GM12878 (cell line): ENCODE measurements at regions of chr19 and their contacts with region 1.

Region 1: GRCh38 chr19:14198384-14199376 is 7.3 kb downstream of the ADGRL1 start:
- DNase-seq: no peak
- ATAC-seq: peak; percentile 20; the same call in 2 of the 3 replicates
- H3K4me3 ChIP-seq: no peak overlapping the region
- H3K27ac ChIP-seq: no peak overlapping the region
- H3K4me1 ChIP-seq: no peaks in the 10 kb centered on the region; the same call in 1 of the 2 replicates
- H3K27me3 ChIP-seq: no peaks in the 10 kb centered on the region
- CTCF ChIP-seq: peak in 2 of 3 experiments; percentile 8 to 25; a peak in 1 of 6 replicates
- EP300 ChIP-seq: no peak
- POLR2A ChIP-seq: no peak
- RAD21 ChIP-seq: no peak

Region 2: GRCh38 chr19:14318873-14319272 is 120.2 kb after region 1 on chr19:
- CTCF ChIA-PET with region 1: interaction called, 15 read pairs
- POLR2A ChIA-PET with region 1: no interaction called
- RAD21 ChIA-PET with region 1: interaction called, 13 read pairs
- SMC1A ChIA-PET with region 1: no interaction called
- in situ Hi-C with region 1: no loop called
- intact Hi-C with region 1: no loop called
- DNase-seq: no peak
- ATAC-seq: peak; percentile 90
- H3K4me3 ChIP-seq: no peak overlapping the region
- H3K27ac ChIP-seq: no peak overlapping the region
- H3K4me1 ChIP-seq: no peaks in the 10 kb centered on the region
- H3K27me3 ChIP-seq: no peaks in the 10 kb centered on the region
- CTCF ChIP-seq: peak; percentile 45 to 77 (median 68); a peak in 5 of 6 replicates
- EP300 ChIP-seq: no peak
- POLR2A ChIP-seq: no peak
- RAD21 ChIP-seq: peak; percentile 78

Region 3: GRCh38 chr19:14354445-14354844 is 155.8 kb after region 1 on chr19:
- CTCF ChIA-PET with region 1: interaction called, 95 read pairs
- POLR2A ChIA-PET with region 1: no interaction called
- RAD21 ChIA-PET with region 1: interaction called, 33 read pairs
- SMC1A ChIA-PET with region 1: interaction called, 35 read pairs
- in situ Hi-C with region 1: loop called (anchors 5 kb)
- intact Hi-C with region 1: no loop called
- DNase-seq: no peak
- ATAC-seq: peak; percentile 60
- H3K4me3 ChIP-seq: no peak overlapping the region
- H3K27ac ChIP-seq: no peak overlapping the region
- H3K4me1 ChIP-seq: peaks cover 25% of the 10 kb centered on the region
- H3K27me3 ChIP-seq: no peaks in the 10 kb centered on the region
- CTCF ChIP-seq: no peak
- EP300 ChIP-seq: no peak
- POLR2A ChIP-seq: no peak
- RAD21 ChIP-seq: no peak

Region 4: GRCh38 chr19:14479975-14480699 is 281.5 kb after region 1 on chr19:
- CTCF ChIA-PET with region 1: interaction called, 11 read pairs
- POLR2A ChIA-PET with region 1: no interaction called
- RAD21 ChIA-PET with region 1: no interaction called
- SMC1A ChIA-PET with region 1: no interaction called
- in situ Hi-C with region 1: loop called (anchors 5 kb)
- intact Hi-C with region 1: loop called (anchors 10 kb)
- DNase-seq: no peak
- ATAC-seq: peak; percentile 92
- H3K4me3 ChIP-seq: no peak overlapping the region
- H3K27ac ChIP-seq: no peak overlapping the region
- H3K4me1 ChIP-seq: no peaks in the 10 kb centered on the region; the same call in 1 of the 2 replicates
- H3K27me3 ChIP-seq: no peaks in the 10 kb centered on the region
- CTCF ChIP-seq: peak; percentile 86 to 96 (median 86)
- EP300 ChIP-seq: no peak
- POLR2A ChIP-seq: no peak
- RAD21 ChIP-seq: peak; percentile 53

Region 5: DNA sequence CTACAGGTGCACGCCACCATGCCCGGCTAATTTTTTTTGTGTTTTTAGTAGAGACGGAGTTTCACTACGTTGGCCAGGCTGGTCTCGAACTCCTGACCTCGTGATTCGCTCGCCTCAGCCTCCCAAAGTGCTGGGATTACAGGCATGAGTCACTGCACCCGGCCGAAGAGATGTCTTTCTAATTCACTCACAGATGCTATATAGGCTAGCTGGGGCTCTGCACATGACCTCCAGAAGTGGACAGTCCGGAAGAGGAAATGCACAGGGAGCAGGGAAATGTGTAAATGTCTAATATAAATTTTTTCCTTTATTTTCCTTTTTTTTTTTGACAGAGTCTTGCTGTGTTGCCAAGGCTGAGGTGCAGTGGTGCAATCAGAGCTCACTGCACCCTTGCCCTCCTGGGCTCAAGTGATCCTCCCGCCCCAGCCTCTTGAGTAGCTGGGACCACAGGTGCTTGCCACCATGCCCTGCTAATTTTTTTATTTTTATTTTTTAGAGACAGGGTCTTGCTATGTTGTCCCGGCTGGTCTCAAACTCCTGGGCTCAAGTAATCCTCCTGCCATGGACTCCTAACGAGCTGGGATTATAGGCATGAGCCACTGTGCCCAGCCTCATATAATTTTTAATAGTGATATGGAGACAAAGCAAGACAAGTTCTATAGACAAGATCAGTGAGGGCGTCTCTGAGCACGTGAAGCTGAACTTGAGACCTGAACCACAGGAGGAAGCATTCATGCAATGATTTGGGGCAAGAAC is 288.9 kb after region 1 on chr19:
- CTCF ChIA-PET with region 1: interaction called, 3 read pairs
- POLR2A ChIA-PET with region 1: interaction called, 3 read pairs
- RAD21 ChIA-PET with region 1: no interaction called
- SMC1A ChIA-PET with region 1: no interaction called
- in situ Hi-C with region 1: loop called (anchors 5 kb)
- intact Hi-C with region 1: loop called (anchors 10 kb)
- DNase-seq: no peak
- ATAC-seq: no peak
- H3K4me3 ChIP-seq: no peak overlapping the region
- H3K27ac ChIP-seq: no peak overlapping the region
- H3K4me1 ChIP-seq: no peaks in the 10 kb centered on the region
- H3K27me3 ChIP-seq: no peaks in the 10 kb centered on the region
- CTCF ChIP-seq: no peak
- EP300 ChIP-seq: no peak
- POLR2A ChIP-seq: no peak
- RAD21 ChIP-seq: no peak